ENCODE measurements at regions of chr10 and their contacts with region 1.

Region 1: DNA sequence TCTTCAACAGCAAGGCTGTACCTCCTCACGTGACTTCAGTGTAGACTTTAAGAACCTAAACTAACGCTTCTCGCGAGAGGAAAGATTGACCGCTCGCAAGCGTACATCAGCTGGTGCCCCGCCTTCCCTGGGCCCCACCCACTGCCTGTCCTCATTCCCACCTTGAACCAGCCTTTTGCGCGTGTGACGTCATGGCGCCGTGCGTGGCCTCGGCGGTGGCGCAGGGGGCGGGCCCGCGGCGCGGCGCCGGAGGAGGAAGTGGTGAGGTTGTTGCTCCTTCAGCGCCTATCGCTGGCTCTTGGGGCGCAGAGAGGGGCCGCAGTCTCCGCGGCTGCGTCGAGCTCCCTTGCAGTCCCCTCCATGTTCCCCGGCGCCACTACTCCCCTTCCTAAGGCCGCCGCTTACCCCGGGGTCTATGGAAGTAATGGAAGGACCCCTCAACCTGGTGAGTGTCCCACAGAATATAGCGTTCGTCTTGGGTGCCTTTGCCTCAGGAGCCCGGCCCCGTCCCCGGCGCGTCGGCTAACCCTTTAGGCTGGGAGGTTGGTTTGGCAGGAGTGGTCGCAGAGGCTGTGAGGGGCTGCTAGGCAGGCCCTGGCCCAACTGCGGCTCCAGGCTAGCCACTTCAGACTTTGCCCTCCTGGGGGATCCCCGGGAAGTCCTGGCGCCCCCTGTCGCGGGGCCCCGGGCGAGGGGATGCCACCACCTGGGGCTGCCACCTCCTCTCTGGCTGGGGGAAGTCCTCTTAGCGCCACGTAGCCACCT is at the start of gene NRBF2:
- DNase-seq: peak; percentile 98
- total RNA-seq, gene NRBF2: 12.0 TPM

Region 2: DNA sequence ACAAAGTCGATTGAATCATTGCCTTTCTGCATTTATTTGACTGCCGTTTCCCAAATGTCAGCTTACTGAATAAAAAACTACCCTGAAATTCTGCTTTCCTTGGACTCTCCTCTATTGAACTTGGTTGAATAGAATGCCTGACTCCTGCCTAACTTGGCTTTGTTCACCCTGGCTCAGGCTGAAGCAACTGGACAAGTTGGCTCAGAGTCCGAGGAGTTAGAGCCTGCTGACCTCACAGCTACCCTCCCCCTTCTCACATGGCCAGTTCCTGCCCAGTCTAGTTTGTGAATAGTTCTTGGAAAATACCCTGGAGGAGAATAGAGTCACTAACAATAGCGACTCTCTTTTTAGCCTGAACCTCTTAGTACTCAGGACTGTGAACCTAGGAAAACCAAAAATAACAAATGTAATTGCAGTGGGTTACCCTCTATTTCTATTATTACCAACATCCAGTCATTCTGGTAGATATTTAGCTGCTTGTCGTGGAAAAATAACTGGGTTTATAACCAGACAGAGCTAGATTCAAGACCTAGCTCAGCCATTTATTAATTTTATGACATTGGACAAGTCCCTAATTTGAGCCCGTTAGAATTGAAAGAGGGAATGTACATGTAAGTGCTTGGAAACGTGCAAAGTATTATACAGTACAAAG is 17.4 kb before region 1 on chr10:
- intact Hi-C with region 1: loop called (anchors 2 kb)
- DNase-seq: peak; percentile 84